Tibial artery (tissue), 4 donors: ENCODE measurements at regions of chrX and their contacts with region 1.

Region 1: GRCh38 chrX:2809882-2810281 is 18.8 kb upstream of the GYG2 start:
- DNase-seq: no peak
- H3K4me3 ChIP-seq: no peak overlapping the region
- H3K27ac ChIP-seq: no peak overlapping the region
- H3K4me1 ChIP-seq: peaks cover 0 to 6% (median 0%) of the 10 kb centered on the region in 4 donors
- H3K27me3 ChIP-seq: no peaks in the 10 kb centered on the region
- CTCF ChIP-seq: no peak

Region 2: DNA sequence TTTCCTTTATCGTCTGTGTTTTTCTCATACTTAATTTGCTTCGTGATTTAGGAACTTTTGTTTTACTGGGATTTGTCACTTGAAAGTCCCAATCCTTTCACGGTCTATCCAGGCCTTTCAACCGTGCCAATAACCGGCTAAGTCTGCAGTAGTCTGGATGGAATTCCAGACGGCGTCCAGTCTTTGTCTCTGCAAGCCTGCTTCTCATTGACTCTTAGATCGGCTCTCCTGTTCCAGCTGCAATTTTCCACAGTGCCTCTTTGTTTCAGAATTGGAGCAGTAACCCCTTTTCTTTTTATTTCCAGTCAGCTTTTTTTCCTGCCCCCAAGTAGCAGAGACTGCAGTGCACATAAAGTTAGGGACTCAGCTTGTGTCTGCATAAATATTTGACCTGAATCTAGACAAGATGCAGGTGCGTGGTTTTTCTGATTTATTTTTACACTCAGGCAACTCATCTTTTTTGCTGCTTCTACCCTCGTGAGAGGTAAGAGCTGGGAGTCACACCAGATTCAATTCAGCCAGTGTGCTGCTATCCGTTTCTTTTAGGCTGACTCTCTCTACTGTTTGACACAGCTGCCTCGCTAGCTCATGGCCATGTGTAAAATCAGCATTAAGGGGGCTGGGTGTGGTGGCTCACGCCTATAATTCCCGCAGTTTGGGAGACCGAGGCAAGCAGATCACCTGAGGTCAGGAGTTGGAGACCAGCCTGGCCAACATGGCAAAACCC is 271.7 kb before region 1 on chrX:
- intact Hi-C with region 1: no loop called
- DNase-seq: no peak
- H3K4me3 ChIP-seq: no peak overlapping the region
- H3K27ac ChIP-seq: no peak overlapping the region
- H3K4me1 ChIP-seq: no peaks in the 10 kb centered on the region
- H3K27me3 ChIP-seq: peaks cover 0 to under 1% of the 10 kb centered on the region in 2 donors
- CTCF ChIP-seq: no peak

Region 3: GRCh38 chrX:2640275-2641150 is 169.4 kb before region 1 on chrX:
- intact Hi-C with region 1: loop called (anchors 5 kb)
- DNase-seq: no peak
- H3K4me3 ChIP-seq: no peak overlapping the region
- H3K27ac ChIP-seq: no peak overlapping the region
- H3K4me1 ChIP-seq: no peaks in the 10 kb centered on the region
- H3K27me3 ChIP-seq: no peaks in the 10 kb centered on the region
- CTCF ChIP-seq: no peak